Activated B cell treated with CpG ODN at 0.5 μM for 24 hours (primary cell): ENCODE measurements at regions of chr17 and their contacts with region 1.

Region 1: DNA sequence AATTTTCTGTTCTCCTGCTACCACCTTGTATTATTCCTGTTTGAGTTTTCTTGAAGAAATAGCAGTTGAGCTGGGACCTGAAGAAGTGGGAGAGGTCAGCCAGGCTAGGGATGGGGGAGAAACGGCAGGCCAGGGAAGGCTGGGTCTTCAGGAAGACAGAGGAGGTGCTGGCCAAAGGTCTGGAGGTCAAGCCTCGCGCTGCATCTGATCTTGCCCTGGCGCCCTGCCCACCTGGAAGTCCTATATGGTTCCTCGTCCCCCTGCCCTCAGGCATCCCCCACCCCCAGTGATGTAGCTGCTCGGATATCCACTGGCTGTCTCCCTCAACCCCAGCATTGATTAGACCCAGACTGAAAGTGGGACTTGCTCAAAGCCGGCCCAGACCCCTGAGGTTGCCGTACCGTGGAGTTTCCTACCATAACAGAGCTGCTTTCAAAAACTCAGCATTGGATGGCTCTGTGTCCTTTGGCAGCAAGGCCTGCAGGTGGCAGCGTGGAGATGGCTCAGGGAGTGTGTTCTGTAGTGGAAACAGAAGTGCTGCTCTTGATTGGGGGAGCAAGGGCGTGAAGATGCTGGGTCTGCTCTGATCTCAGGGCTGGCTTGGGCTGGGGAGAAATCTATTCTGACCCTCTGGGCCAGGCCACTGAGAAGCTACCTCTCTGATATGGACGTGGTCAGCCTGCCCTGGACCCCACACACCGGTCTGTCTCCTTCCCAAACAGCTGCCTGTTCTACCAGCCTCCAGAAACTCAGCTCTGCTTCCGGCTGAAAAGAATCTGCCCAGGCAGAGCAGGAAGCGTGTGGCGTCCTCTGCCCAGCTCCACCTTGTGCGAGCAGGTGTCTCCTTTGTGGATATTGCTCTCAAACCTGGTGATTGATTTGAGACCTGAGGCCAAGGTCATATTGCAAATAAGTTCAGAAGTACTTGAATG is 107.0 kb upstream of the CACNG5 start:
- DNase-seq: no peak
- ATAC-seq: peak; percentile 28
- H3K4me3 Mint-ChIP-seq: no peak overlapping the region
- H3K27ac Mint-ChIP-seq: no peak overlapping the region
- H3K4me1 Mint-ChIP-seq: no peaks in the 10 kb centered on the region
- H3K27me3 Mint-ChIP-seq: peaks cover 4% of the 10 kb centered on the region
- CTCF ChIP-seq: no peak

Region 2: DNA sequence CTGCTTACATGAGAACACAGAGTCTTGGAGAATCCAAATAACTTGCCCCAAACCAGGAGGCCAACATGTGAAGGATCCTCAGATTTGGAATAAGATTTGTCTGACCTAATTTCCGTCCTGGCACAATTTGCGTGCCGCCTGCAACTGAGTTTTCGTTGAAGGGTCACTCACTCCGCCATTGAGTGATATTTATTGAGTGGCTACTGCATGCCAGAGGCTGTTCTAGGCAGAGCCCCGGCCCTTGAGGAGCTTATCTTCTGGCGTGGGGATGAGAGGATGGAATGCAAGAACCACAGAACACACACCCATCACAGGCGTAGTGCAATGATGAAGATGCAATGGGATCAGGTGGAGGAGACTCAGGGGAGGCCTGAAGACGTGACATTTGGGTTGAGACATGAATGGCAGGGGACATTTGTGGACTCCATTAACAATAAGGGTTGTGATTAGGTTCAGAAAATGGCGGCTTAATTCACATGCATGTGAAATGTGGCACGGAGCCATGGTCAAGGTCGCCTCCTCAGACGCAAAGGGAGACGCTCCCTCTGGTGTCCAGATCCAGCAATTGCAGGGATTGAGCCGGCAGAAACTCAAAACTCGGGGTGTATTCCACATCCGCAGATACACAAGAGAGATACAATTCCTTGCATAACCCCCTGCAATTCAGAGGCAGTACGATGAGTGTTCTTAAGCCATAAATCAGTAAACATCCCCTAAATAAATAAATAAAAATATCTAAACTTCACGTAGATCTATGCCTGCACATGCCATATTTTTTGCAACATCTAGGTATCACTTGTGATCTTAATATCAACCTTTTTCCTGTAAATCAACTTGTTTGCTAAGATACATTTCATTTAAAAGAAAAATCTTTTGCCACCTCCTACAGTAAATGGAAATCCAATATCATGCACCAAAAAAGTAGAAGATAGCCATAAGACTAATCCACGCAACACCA is 178.7 kb after region 1 on chr17:
- CTCF ChIA-PET with region 1: no interaction called
- POLR2A ChIA-PET with region 1: no interaction called
- intact Hi-C with region 1: loop called (anchors 1 kb)
- DNase-seq: no peak
- ATAC-seq: peak; percentile 49
- H3K4me3 Mint-ChIP-seq: no peak overlapping the region
- H3K27ac Mint-ChIP-seq: no peak overlapping the region
- H3K4me1 Mint-ChIP-seq: peaks cover 2% of the 10 kb centered on the region
- H3K27me3 Mint-ChIP-seq: no peaks in the 10 kb centered on the region
- CTCF ChIP-seq: no peak